ENCODE measurements at regions of chr9 and their contacts with region 1.

Region 1: GRCh38 chr9:125889476-125890419 is 142.6 kb downstream of the PBX3 start:
- DNase-seq: no peak
- H3K4me3 ChIP-seq: peak overlapping the region; percentile 54 to 70 (median 62)
- H3K27ac ChIP-seq: peak overlapping the region; percentile 75 to 80 (median 76)
- H3K4me1 ChIP-seq: peaks cover 22 to 80% (median 61%) of the 10 kb centered on the region in 4 donors
- H3K27me3 ChIP-seq: no peaks in the 10 kb centered on the region
- CTCF ChIP-seq: no peak
- EP300 ChIP-seq: no peak
- POLR2A ChIP-seq: no peak

Region 2: GRCh38 chr9:125593585-125594229 is 296.0 kb before region 1 on chr9:
- intact Hi-C with region 1: no loop called
- DNase-seq: no peak
- H3K4me3 ChIP-seq: no peak overlapping the region
- H3K27ac ChIP-seq: no peak overlapping the region
- H3K4me1 ChIP-seq: peaks cover 0 to 4% (median 0%) of the 10 kb centered on the region in 4 donors
- H3K27me3 ChIP-seq: no peaks in the 10 kb centered on the region
- CTCF ChIP-seq: no peak
- EP300 ChIP-seq: no peak
- POLR2A ChIP-seq: no peak

Region 3: GRCh38 chr9:125746017-125746773 is 143.6 kb before region 1 on chr9:
- intact Hi-C with region 1: loop called (anchors 5 kb)
- DNase-seq: peak; percentile 97
- H3K4me3 ChIP-seq: peak overlapping the region; percentile 78 to 96 (median 92)
- H3K27ac ChIP-seq: peak overlapping the region; percentile 88 to 96 (median 92)
- H3K4me1 ChIP-seq: peaks cover 23 to 36% (median 34%) of the 10 kb centered on the region in 4 donors
- H3K27me3 ChIP-seq: no peaks in the 10 kb centered on the region
- CTCF ChIP-seq: no peak
- EP300 ChIP-seq: no peak
- POLR2A ChIP-seq: no peak

Measured in esophagus muscularis mucosa (tissue), 4 donors.